ENCODE measurements at regions of chr3 and their contacts with region 1.

Region 1: GRCh38 chr3:171772427-171773056 is 37.7 kb downstream of the PLD1 start:
- DNase-seq: peak in 3 of 4 donors; percentile 44 to 71 (median 44)
- ATAC-seq: peak; percentile 69
- H3K4me3 ChIP-seq: no peak overlapping the region
- H3K27ac ChIP-seq: no peak overlapping the region
- H3K4me1 ChIP-seq: peaks cover 0 to 48% of the 10 kb centered on the region in 2 donors
- H3K27me3 ChIP-seq: no peaks in the 10 kb centered on the region
- CTCF ChIP-seq: peak; percentile 55 to 64

Region 2: DNA sequence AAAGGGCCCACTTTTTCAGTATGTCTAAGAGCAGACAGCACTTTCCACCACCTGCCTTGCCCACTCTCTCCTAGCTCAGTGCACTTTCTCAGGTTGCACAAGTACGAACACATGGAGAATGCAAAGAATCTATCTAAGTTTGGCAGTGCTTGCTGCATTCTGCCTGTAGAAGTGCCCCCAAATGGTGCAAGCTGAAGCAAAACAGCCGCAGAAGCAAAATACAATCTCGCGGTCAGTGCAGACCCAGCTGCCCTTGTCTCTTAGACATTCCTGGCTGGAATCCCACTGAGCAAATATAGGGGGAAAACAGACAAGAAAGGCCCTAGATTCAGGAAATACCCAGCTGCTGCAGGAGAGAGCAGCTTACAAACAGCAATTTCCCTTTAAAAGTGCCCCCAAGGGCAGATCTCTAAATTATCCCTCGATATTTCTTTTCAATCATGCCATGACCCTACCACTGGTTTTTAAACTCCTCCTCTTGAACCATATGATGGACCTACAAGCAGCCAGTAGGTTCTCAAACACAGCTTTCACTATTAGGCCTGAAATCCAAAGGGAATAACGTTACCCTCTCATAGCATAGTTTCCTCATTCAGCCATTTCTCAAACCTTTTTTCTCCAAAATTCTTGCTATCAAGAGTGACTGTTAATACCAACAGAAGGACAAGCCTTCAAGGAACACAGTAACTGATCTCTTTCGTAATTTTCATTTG is 379.4 kb before region 1 on chr3:
- intact Hi-C with region 1: no loop called
- DNase-seq: peak in 2 of 4 donors; percentile 72 to 80
- ATAC-seq: peak; percentile 64
- H3K4me3 ChIP-seq: no peak overlapping the region
- H3K27ac ChIP-seq: peak overlapping the region in 1 of 2 donors; percentile 8
- H3K4me1 ChIP-seq: peaks cover 6 to 8% of the 10 kb centered on the region in 2 donors
- H3K27me3 ChIP-seq: no peaks in the 10 kb centered on the region
- CTCF ChIP-seq: no peak

Region 3: GRCh38 chr3:171646357-171647133 is 126.0 kb before region 1 on chr3:
- intact Hi-C with region 1: loop called in 1 of 2 experiments (anchors 10 kb)
- DNase-seq: peak in 2 of 4 donors; percentile 34 to 54
- ATAC-seq: peak; percentile 78
- H3K4me3 ChIP-seq: no peak overlapping the region
- H3K27ac ChIP-seq: no peak overlapping the region
- H3K4me1 ChIP-seq: no peaks in the 10 kb centered on the region
- H3K27me3 ChIP-seq: no peaks in the 10 kb centered on the region
- CTCF ChIP-seq: peak; percentile 40 to 63

Region 4: GRCh38 chr3:171829841-171830517 is 57.4 kb after region 1 on chr3:
- intact Hi-C with region 1: no loop called
- DNase-seq: peak; percentile 41 to 84 (median 74)
- ATAC-seq: peak; percentile 89
- H3K4me3 ChIP-seq: no peak overlapping the region
- H3K27ac ChIP-seq: peak overlapping the region; percentile 15 to 71
- H3K4me1 ChIP-seq: peaks cover 13 to 61% of the 10 kb centered on the region in 2 donors
- H3K27me3 ChIP-seq: no peaks in the 10 kb centered on the region
- CTCF ChIP-seq: peak; percentile 64 to 66